ENCODE measurements at regions of chr4 and their contacts with region 1.

Region 1: GRCh38 chr4:73653695-73654106 is 33.5 kb upstream of the RASSF6 start:
- DNase-seq: no peak
- ATAC-seq: peak; percentile 87
- H3K4me3 ChIP-seq: no peak overlapping the region
- H3K27ac ChIP-seq: no peak overlapping the region
- H3K4me1 ChIP-seq: no peaks in the 10 kb centered on the region
- H3K27me3 ChIP-seq: no peaks in the 10 kb centered on the region
- CTCF ChIP-seq: peak; percentile 55

Region 2: DNA sequence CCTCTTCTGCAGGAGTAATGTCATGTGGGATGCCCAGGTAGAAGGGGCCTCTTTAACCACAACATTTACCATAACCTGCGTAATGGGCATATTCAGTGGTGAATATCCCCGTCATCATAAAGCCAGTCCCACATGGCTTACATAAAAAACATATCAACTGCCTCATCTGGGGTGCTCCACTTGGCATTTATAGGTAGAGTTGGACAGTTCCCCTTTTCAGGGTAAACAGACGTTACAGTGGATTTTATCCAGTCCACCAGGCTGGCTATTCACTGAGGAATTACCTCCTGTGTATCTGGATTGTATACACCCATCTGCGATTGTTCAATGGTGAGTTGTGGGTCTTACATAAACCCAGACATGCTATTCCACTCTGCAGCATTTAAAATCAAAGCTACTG is 324.4 kb before region 1 on chr4:
- intact Hi-C with region 1: no loop called
- DNase-seq: no peak
- ATAC-seq: no peak
- H3K4me3 ChIP-seq: no peak overlapping the region
- H3K27ac ChIP-seq: no peak overlapping the region
- H3K4me1 ChIP-seq: no peaks in the 10 kb centered on the region
- H3K27me3 ChIP-seq: no peaks in the 10 kb centered on the region
- CTCF ChIP-seq: no peak

Region 3: DNA sequence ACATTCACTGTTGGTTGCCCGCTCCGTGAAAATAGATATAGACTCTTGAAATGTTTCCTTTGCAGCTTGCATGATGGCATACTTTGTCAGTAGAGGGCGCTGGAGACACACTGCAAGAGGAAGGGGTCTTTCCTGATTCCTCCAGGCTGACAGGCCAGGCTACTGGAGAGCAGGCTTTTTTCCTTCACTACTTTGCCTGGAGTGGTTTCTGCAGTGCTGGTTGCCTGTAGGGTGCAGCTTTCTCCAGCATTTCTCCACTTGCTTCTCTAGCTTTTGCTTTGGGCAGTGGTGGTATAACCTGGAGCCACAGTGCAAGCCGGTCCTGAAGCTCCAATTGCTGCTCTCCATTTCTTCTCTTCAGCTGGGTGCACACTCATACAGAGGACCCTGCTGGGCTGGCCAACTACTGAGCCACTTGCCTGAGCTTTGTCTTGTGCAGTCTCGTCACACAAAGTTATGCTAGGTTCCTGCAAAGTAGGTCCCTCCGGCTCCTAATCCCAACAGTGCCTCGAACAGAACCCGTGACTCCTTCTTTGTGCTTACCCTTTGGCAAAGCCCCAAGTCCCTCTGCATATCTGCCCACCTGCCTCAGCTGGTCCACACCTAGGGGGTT is 79.8 kb before region 1 on chr4:
- intact Hi-C with region 1: loop called (anchors 10 kb)
- DNase-seq: no peak
- ATAC-seq: peak; percentile 95
- H3K4me3 ChIP-seq: no peak overlapping the region
- H3K27ac ChIP-seq: no peak overlapping the region
- H3K4me1 ChIP-seq: no peaks in the 10 kb centered on the region
- H3K27me3 ChIP-seq: no peaks in the 10 kb centered on the region
- CTCF ChIP-seq: peak; percentile 78

Measured in upper lobe of right lung (tissue), 1 donor.